ACHN (cell line): ENCODE measurements at regions of chr17 and their contacts with region 1.

Region 1: DNA sequence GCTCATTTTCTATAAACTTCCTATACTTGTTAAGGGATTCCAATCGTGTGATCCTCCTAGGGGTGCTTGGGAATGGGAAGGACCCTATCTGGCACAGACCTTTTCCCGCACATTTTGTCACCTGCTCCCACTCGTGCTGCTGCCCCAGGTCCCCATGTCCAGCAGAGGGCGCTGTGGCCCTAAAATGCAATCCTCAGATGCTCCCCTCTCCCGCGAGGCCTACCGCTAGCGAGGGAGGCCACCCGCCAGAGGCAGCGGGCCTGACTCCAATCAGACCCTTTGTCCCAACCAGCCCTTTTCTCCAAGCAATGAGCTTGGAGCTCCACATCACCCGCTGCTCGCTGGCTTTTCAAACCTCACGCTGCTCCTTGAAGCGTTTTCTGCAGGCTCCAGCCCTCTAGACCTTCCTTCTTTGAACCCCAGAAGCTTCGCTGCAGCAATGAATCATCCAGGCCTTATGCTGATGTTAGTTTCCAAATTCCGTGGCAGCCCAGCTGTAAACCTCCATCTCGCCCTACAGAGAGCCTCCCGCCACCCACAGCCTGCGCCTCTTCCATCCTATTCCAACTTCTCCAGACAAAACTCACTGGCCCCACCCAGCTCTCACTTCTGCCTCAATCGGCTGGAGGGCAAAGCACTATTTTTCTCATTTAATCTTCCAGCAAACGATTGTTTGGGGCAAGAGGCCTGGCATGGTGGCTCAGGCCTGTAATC is 23.6 kb upstream of the FZD2 start:
- DNase-seq: peak; percentile 90

Region 2: GRCh38 chr17:44636562-44636961 is 102.9 kb after region 1 on chr17:
- in situ Hi-C with region 1: loop called (anchors 25 kb)
- DNase-seq: peak; percentile 63